ENCODE measurements at regions of chr10 and their contacts with region 1.

Region 1: GRCh38 chr10:10677479-10677878 is 340.2 kb upstream of the CELF2 start:
- DNase-seq: peak; percentile 39
- H3K4me3 ChIP-seq: no peak overlapping the region
- H3K27ac ChIP-seq: no peak overlapping the region
- H3K4me1 ChIP-seq: no peaks in the 10 kb centered on the region
- CTCF ChIP-seq: peak; percentile 68

Region 2: DNA sequence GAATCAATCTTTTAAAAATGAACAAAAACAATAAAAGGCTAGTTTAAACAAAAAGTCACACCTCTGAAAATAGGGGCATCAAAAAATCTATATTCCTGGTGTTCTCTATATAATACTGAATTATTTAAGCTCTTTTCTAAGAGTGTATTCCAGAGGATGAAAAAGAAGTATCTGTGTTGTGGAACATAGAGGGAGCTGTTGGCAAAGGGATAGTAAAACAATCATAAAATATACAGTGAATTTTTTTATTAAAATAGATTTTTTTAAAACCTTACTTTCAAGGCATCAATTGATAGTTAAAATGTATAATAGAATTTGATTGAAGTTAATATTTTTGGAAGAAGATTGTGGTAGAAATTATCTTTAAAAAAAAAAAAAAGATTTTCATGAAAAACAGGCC is 1068.9 kb before region 1 on chr10:
- CTCF ChIA-PET with region 1: no interaction called
- POLR2A ChIA-PET with region 1: no interaction called
- intact Hi-C with region 1: loop called (anchors 5 kb)
- DNase-seq: peak; percentile 2
- H3K4me3 ChIP-seq: no peak overlapping the region
- H3K27ac ChIP-seq: no peak overlapping the region
- H3K4me1 ChIP-seq: no peaks in the 10 kb centered on the region
- CTCF ChIP-seq: peak; percentile 68

Region 3: DNA sequence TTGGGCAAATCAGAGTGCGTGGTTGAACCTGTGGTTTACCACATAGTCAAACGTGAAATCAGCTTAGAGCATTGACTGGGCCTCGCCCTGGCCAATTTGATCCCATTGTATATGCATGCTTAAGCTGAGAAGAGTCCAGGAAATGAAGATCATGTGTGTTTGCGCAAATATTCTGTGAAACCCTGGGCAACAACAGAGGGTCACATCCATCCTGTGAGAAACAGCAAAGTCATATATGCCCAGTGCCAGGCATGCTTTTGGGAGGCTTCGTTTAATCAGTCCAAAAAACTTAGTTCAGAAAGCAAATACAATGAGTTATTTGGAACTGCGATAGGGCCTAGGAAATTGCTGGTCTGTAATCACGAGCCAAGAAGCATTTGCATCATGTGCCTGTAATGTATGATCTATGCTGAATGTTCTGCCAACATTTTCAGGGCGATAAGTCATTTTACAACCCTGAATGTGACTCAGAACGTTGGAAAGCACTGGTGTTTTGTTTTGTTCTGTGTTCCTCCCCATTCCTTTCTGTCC is 71.9 kb before region 1 on chr10:
- CTCF ChIA-PET with region 1: no interaction called
- POLR2A ChIA-PET with region 1: no interaction called
- intact Hi-C with region 1: no loop called
- DNase-seq: no peak
- H3K4me3 ChIP-seq: no peak overlapping the region
- H3K27ac ChIP-seq: no peak overlapping the region
- H3K4me1 ChIP-seq: no peaks in the 10 kb centered on the region
- CTCF ChIP-seq: no peak